ENCODE measurements at regions of chr21 and their contacts with region 1.

Region 1: DNA sequence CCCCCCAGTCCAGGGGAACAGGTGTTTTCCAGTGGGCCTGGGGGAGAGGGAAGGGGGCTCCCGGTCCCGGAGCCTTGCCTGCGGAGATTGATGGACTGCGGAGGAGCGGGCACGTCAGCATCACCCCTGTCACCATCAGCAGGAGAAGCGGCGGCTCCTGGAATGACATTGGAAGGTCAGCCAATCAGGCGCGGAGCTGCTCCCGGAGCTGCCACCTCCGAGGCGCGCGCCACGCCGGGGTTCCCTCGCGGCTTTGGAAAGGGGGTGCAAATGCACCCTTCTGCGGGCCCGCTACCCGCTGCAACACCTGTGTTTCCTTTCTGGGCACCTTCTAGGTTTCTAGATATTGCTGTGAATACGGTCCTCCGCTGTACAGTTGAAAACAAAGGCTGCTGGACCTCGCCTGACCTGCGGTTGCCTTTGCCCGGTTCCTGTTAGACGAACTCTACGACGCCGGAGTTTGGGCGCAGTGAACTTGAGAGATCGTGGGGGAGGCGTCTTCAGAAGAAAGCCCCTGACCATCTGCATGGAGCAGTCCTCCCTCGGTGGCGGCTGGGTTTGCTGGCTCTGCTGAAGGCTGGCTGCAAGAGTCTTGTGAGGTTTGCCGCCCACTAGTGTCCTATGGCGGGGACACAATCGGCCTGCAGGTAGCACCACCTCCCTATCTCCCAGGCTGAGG is 5.3 kb downstream of the DSCAM start:
- DNase-seq: peak; percentile 64
- H3K4me3 ChIP-seq: peak overlapping the region; percentile 13 to 32
- H3K27ac ChIP-seq: no peak overlapping the region
- H3K4me1 ChIP-seq: no peaks in the 10 kb centered on the region
- H3K27me3 ChIP-seq: no peaks in the 10 kb centered on the region
- CTCF ChIP-seq: peak in 3 of 4 experiments; percentile 45 to 57 (median 47)
- POLR2A ChIP-seq: no peak

Region 2: DNA sequence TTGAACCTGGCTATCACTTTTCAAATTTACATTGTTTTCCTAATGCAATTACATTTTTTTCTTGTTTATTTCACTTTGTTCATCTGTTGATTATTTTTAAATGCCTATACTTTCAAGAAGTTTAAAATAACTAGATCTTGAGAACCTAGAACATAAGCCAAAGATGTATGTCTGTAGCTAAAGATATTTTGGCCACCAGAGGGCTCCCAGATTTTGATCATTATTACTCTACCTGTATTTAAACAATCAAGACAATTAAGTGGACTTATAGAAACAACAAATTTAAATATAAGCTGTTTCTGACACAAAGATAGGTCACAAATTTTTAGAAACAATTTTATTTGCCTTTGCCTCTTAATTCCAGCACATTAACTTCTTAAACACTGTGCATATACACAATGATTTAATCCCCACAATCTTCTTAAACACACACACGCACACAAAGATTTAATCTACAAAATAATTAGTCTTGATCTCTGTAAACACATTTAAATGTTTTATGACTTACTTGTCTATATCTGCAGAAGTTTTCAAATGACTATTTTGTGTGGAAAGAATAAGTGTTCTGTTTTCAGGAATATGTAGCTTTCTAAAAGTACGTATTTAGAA is 374.7 kb before region 1 on chr21:
- intact Hi-C with region 1: loop called (anchors 10 kb)
- DNase-seq: peak; percentile 37
- H3K4me3 ChIP-seq: no peak overlapping the region
- H3K27ac ChIP-seq: no peak overlapping the region
- H3K4me1 ChIP-seq: no peaks in the 10 kb centered on the region
- H3K27me3 ChIP-seq: no peaks in the 10 kb centered on the region
- CTCF ChIP-seq: peak in 3 of 4 experiments; percentile 58 to 64 (median 58)
- POLR2A ChIP-seq: no peak

Region 3: GRCh38 chr21:40792691-40793456 is 48.8 kb before region 1 on chr21:
- intact Hi-C with region 1: no loop called
- DNase-seq: no peak
- H3K4me3 ChIP-seq: no peak overlapping the region
- H3K27ac ChIP-seq: no peak overlapping the region
- H3K4me1 ChIP-seq: no peaks in the 10 kb centered on the region
- H3K27me3 ChIP-seq: no peaks in the 10 kb centered on the region
- CTCF ChIP-seq: no peak
- POLR2A ChIP-seq: no peak

Measured in prostate gland (tissue), 2 donors.